B cell (primary cell): ENCODE measurements at regions of chr17 and their contacts with region 1.

Region 1: DNA sequence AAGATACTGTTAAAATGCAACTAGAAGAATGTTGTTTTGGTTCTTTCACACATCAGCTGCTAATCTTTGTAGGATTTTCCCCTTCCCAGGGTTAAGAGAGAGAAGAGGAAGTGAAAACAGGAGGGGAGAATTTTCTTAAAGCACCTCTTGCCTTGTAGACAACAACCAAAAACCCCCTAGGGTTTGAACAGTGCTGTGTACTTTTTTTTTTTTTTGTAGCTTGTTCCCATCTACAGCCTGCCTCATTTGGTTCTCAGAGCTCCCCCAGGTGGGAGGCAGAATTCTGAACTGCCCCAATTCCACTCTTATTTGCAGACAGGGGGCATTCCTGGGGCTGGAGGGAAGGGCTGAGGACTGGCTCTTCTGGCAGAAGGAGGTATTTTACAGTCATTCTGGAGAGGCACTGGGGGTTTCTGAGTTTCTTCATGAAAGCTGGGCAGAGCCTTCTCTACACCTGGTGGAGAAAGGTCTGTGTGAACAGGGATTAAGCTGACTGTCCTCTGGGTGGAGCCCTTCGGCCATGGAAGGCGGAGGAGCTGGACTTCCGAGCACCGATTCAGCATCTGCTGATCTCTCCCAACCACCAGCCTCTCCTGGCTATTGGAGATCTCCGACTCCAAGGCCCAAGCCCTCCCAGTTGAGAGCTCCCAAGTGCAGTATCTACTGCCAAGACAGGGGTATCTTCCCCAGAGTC is 32.2 kb downstream of the SMARCE1 start:
- DNase-seq: peak; percentile 92
- ATAC-seq: peak; percentile 85
- H3K4me3 ChIP-seq: peak overlapping the region in 3 of 5 experiments; percentile 12 to 27 (median 25)
- H3K4me3 Mint-ChIP-seq: peak overlapping the region; percentile 73
- H3K27ac ChIP-seq: peak overlapping the region; percentile 90 to 96
- H3K27ac Mint-ChIP-seq: peak overlapping the region; percentile 94
- H3K4me1 ChIP-seq: peaks cover 58 to 63% of the 10 kb centered on the region in 2 donors
- H3K4me1 Mint-ChIP-seq: peaks cover 68% of the 10 kb centered on the region
- H3K27me3 ChIP-seq: no peaks in the 10 kb centered on the region
- H3K27me3 Mint-ChIP-seq: no peaks in the 10 kb centered on the region
- CTCF ChIP-seq: peak; percentile 68

Region 2: DNA sequence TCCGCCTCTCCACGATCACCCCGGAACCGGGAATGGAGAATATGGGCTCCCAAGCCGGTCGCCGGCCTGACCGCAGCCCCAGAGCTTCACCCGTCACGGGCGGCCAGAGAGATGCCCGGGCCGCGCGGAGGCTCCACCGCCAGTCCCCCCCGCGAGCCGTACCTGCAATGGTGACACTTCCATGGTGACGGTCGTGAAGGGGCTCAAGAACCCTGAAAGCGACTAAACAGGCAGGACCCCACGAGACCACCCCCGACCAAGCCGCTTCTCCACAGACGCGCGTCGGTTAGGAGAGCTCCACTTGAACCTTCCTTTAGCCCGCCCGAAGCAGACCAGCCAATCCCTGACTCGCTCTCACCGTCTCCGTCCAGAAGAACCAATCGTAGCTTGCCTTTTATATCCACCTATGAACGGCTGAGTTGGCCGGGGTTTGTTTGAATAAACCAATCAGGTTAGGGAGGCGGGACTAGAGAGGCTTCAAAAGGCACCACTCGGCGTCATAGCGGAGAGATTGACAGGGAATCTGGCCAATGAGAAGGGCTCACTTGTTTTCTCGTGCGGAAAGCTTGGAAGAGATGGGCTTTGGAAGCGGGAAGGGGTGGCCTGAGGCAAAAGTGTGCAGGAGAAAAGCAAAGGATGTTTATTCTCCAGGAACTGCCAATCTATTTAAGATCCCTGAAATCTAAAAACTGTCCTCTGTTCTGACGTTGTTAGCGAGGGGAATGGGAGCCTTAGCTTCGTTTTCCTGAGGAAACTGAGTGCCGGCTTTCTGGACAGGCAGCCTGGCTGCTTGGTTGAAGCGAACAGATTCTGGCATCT is 197.6 kb before region 1 on chr17 and contains the start of gene TOP2A:
- CTCF ChIA-PET with region 1: interaction called, 7 read pairs
- POLR2A ChIA-PET with region 1: no interaction called
- intact Hi-C with region 1: loop called (anchors 5 kb)
- DNase-seq: peak; percentile 99
- ATAC-seq: peak; percentile 99
- H3K4me3 ChIP-seq: peak within 1 kb of the TSS; percentile 63 to 93 (median 84)
- H3K4me3 Mint-ChIP-seq: peak within 1 kb of the TSS; percentile 89
- H3K27ac ChIP-seq: peak within 1 kb of the TSS; percentile 63 to 72
- H3K27ac Mint-ChIP-seq: peak within 1 kb of the TSS; percentile 86
- H3K4me1 ChIP-seq: peaks cover 7 to 17% of the 10 kb centered on the region in 2 donors
- H3K4me1 Mint-ChIP-seq: peaks cover 15% of the 10 kb centered on the region
- H3K27me3 ChIP-seq: no peaks in the 10 kb centered on the region
- H3K27me3 Mint-ChIP-seq: no peaks in the 10 kb centered on the region
- CTCF ChIP-seq: no peak
- total RNA-seq, gene TOP2A: 3.0 and 3.1 TPM in 2 replicates

Region 3: GRCh38 chr17:40531051-40531991 is 84.1 kb before region 1 on chr17:
- CTCF ChIA-PET with region 1: interaction called, 93 read pairs
- POLR2A ChIA-PET with region 1: interaction called, 17 read pairs
- intact Hi-C with region 1: loop called (anchors 1 kb)
- DNase-seq: peak; percentile 75
- ATAC-seq: peak; percentile 15
- H3K4me3 ChIP-seq: no peak overlapping the region
- H3K4me3 Mint-ChIP-seq: peak overlapping the region; percentile 69
- H3K27ac ChIP-seq: peak overlapping the region; percentile 72 to 80
- H3K27ac Mint-ChIP-seq: peak overlapping the region; percentile 87
- H3K4me1 ChIP-seq: peaks cover 45 to 51% of the 10 kb centered on the region in 2 donors
- H3K4me1 Mint-ChIP-seq: peaks cover 61% of the 10 kb centered on the region
- H3K27me3 ChIP-seq: no peaks in the 10 kb centered on the region
- H3K27me3 Mint-ChIP-seq: no peaks in the 10 kb centered on the region
- CTCF ChIP-seq: no peak

Region 4: GRCh38 chr17:40551879-40552768 is 63.3 kb before region 1 on chr17:
- CTCF ChIA-PET with region 1: interaction called, 634 read pairs
- POLR2A ChIA-PET with region 1: interaction called, 29 read pairs
- intact Hi-C with region 1: loop called (anchors 1 kb)
- DNase-seq: peak; percentile 52
- ATAC-seq: no peak
- H3K4me3 ChIP-seq: no peak overlapping the region
- H3K4me3 Mint-ChIP-seq: peak overlapping the region; percentile 84
- H3K27ac ChIP-seq: peak overlapping the region; percentile 83 to 98
- H3K27ac Mint-ChIP-seq: peak overlapping the region; percentile 92
- H3K4me1 ChIP-seq: peaks cover 98 to 100% of the 10 kb centered on the region in 2 donors
- H3K4me1 Mint-ChIP-seq: peaks cover 100% of the 10 kb centered on the region
- H3K27me3 ChIP-seq: no peaks in the 10 kb centered on the region
- H3K27me3 Mint-ChIP-seq: no peaks in the 10 kb centered on the region
- CTCF ChIP-seq: no peak

Region 5: GRCh38 chr17:40582328-40582901 is 33.0 kb before region 1 on chr17:
- CTCF ChIA-PET with region 1: interaction called, 39 read pairs
- POLR2A ChIA-PET with region 1: interaction called, 5 read pairs
- intact Hi-C with region 1: no loop called
- DNase-seq: peak; percentile 84
- ATAC-seq: peak; percentile 76
- H3K4me3 ChIP-seq: peak overlapping the region in 3 of 5 experiments; percentile 15 to 52 (median 40)
- H3K4me3 Mint-ChIP-seq: peak overlapping the region; percentile 68
- H3K27ac ChIP-seq: peak overlapping the region; percentile 85 to 87
- H3K27ac Mint-ChIP-seq: peak overlapping the region; percentile 77
- H3K4me1 ChIP-seq: peaks cover 66 to 68% of the 10 kb centered on the region in 2 donors
- H3K4me1 Mint-ChIP-seq: peaks cover 83% of the 10 kb centered on the region
- H3K27me3 ChIP-seq: no peaks in the 10 kb centered on the region
- H3K27me3 Mint-ChIP-seq: no peaks in the 10 kb centered on the region
- CTCF ChIP-seq: no peak

Region 6: DNA sequence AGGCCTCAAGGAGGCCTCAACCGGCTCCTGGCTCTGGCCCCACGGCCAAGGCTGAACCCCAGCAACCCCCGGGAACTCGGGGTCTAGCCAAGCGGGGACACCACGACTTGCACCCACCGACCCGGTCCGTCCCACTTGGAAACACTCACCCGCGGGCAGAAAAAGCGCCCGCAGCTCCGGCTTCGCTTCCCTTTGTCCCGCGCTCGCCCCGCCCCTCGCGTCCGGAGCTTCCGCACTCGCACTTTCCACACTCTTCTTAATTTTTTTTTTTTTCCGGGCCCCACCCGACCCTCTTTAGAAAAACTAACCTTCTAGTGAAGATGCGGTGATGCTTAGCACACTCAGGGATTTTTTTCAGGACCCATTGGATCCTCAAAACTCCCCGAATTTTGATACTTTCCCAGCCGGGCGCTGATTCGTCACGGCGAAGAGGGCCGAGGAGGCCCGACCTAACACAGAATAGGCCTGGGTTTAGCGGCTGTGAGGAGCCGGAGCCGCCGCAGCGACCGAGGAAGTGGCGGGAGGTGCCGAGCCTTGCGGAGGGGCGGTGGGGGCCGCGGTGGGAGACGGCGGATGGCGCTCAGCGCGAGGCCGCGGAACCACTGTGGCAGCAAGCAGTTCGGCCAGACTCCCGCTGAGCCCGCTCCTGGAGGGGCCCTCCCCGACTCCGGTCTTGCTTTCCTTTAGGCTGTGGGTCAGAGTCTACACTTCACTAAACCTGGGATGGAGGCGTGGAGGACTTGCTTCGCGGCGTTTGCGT is 32.4 kb after region 1 on chr17 and contains the start of gene SMARCE1:
- CTCF ChIA-PET with region 1: interaction called, 17 read pairs
- POLR2A ChIA-PET with region 1: interaction called, 4 read pairs
- intact Hi-C with region 1: loop called (anchors 2 kb)
- DNase-seq: peak; percentile 94
- ATAC-seq: peak; percentile 85
- H3K4me3 ChIP-seq: peak within 1 kb of the TSS; percentile 85 to 94 (median 86)
- H3K4me3 Mint-ChIP-seq: peak within 1 kb of the TSS; percentile 89
- H3K27ac ChIP-seq: peak within 1 kb of the TSS; percentile 97 to 100
- H3K27ac Mint-ChIP-seq: peak within 1 kb of the TSS; percentile 94
- H3K4me1 ChIP-seq: peaks cover 25 to 30% of the 10 kb centered on the region in 2 donors
- H3K4me1 Mint-ChIP-seq: peaks cover 38% of the 10 kb centered on the region
- H3K27me3 ChIP-seq: no peaks in the 10 kb centered on the region
- H3K27me3 Mint-ChIP-seq: no peaks in the 10 kb centered on the region
- CTCF ChIP-seq: no peak
- total RNA-seq, gene SMARCE1: 123 and 128 TPM in 2 replicates

Region 7: GRCh38 chr17:40659911-40660310 is 44.5 kb after region 1 on chr17:
- CTCF ChIA-PET with region 1: no interaction called
- POLR2A ChIA-PET with region 1: no interaction called
- intact Hi-C with region 1: no loop called
- DNase-seq: no peak
- ATAC-seq: no peak
- H3K4me3 ChIP-seq: no peak overlapping the region
- H3K4me3 Mint-ChIP-seq: no peak overlapping the region
- H3K27ac ChIP-seq: no peak overlapping the region
- H3K27ac Mint-ChIP-seq: no peak overlapping the region
- H3K4me1 ChIP-seq: peaks cover 2 to 4% of the 10 kb centered on the region in 2 donors
- H3K4me1 Mint-ChIP-seq: peaks cover 3% of the 10 kb centered on the region
- H3K27me3 ChIP-seq: peaks cover 2 to 22% (median 11%) of the 10 kb centered on the region in 4 experiments
- H3K27me3 Mint-ChIP-seq: peaks cover 33% of the 10 kb centered on the region
- CTCF ChIP-seq: no peak

Region 8: GRCh38 chr17:41665566-41666236 is 1050.3 kb after region 1 on chr17:
- CTCF ChIA-PET with region 1: interaction called, 9 read pairs
- POLR2A ChIA-PET with region 1: interaction called, 4 read pairs
- intact Hi-C with region 1: loop called (anchors 1 kb)
- DNase-seq: peak; percentile 96
- ATAC-seq: peak; percentile 72
- H3K4me3 ChIP-seq: peak overlapping the region; percentile 30 to 89 (median 62)
- H3K4me3 Mint-ChIP-seq: peak overlapping the region; percentile 94
- H3K27ac ChIP-seq: peak overlapping the region; percentile 99
- H3K27ac Mint-ChIP-seq: peak overlapping the region; percentile 99
- H3K4me1 ChIP-seq: peaks cover 12 to 41% of the 10 kb centered on the region in 2 donors
- H3K4me1 Mint-ChIP-seq: peaks cover 38% of the 10 kb centered on the region
- H3K27me3 ChIP-seq: no peaks in the 10 kb centered on the region
- H3K27me3 Mint-ChIP-seq: no peaks in the 10 kb centered on the region
- CTCF ChIP-seq: peak; percentile 96